Activated CD4-positive, alpha-beta T cell treated with anti-CD3 and anti-CD28 coated beads, Interleukin-2, amount 10 ng/mL, durations not matched to agents 24 days and 14 days (primary cell): ENCODE measurements at regions of chr9 and their contacts with region 1.

Region 1: GRCh38 chr9:131277910-131278701 is 1.8 kb upstream of the FAM78A start:
- DNase-seq: peak; percentile 90
- H3K4me3 Mint-ChIP-seq: peak overlapping the region; percentile 91
- H3K27ac Mint-ChIP-seq: peak overlapping the region; percentile 95
- H3K4me1 Mint-ChIP-seq: peaks cover 25% of the 10 kb centered on the region
- H3K27me3 Mint-ChIP-seq: peaks cover 14% of the 10 kb centered on the region

Region 2: DNA sequence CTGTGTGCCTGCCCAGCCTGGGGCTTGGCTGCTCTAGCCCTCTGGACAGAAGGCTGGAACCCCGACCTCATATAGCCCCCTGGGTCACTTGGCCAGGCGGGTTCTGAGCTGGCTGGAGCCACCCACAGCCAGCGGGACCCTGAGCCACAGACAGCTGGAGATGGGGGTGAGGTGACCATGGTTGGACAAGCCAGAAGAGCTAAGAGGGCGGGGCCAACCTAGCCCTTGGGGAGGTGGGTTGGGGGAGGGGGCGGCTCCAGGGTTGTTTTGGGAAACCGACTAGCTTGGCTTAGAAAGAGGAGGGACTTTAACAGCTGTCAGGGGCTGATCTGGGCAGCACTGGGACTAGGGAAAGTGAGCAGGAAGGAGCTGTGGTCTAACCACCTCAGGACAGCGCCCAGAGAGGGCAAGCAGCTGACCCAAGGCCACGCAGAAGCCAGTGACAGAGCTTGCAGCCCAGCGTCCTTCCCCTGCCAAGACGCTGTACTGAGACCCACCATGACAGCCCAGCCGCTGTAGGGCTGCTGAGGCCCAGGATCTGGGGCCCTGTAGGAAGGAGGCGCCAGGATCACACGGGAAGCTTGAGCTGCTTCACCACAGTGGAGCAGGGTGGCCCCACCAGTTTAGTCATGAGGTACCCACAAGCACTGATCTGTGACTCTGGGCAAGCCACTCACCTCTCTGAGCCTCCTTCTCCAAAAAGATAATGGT is 179.6 kb before region 1 on chr9:
- intact Hi-C with region 1: no loop called
- DNase-seq: no peak
- H3K4me3 Mint-ChIP-seq: no peak overlapping the region
- H3K27ac Mint-ChIP-seq: no peak overlapping the region
- H3K4me1 Mint-ChIP-seq: peaks cover 3% of the 10 kb centered on the region
- H3K27me3 Mint-ChIP-seq: peaks cover 35% of the 10 kb centered on the region

Region 3: GRCh38 chr9:131125128-131126058 is 152.7 kb before region 1 on chr9 and contains the start of gene NUP214:
- intact Hi-C with region 1: loop called (anchors 2 kb)
- DNase-seq: peak; percentile 100
- H3K4me3 Mint-ChIP-seq: peak within 1 kb of the TSS; percentile 99
- H3K27ac Mint-ChIP-seq: peak within 1 kb of the TSS; percentile 99
- H3K4me1 Mint-ChIP-seq: peaks cover 26% of the 10 kb centered on the region
- H3K27me3 Mint-ChIP-seq: peaks cover 2% of the 10 kb centered on the region
- total RNA-seq, gene NUP214: 77.7 and 79.2 TPM in 2 replicates

Region 4: GRCh38 chr9:131253891-131254491 is 24.1 kb before region 1 on chr9:
- intact Hi-C with region 1: loop called (anchors 2 kb)
- DNase-seq: peak; percentile 61
- H3K4me3 Mint-ChIP-seq: peak overlapping the region; percentile 28
- H3K27ac Mint-ChIP-seq: peak overlapping the region; percentile 93
- H3K4me1 Mint-ChIP-seq: peaks cover 41% of the 10 kb centered on the region
- H3K27me3 Mint-ChIP-seq: no peaks in the 10 kb centered on the region

Region 5: GRCh38 chr9:131668439-131669268 is 390.5 kb after region 1 on chr9:
- intact Hi-C with region 1: loop called (anchors 10 kb)
- DNase-seq: peak; percentile 90
- H3K4me3 Mint-ChIP-seq: peak overlapping the region; percentile 78
- H3K27ac Mint-ChIP-seq: peak overlapping the region; percentile 100
- H3K4me1 Mint-ChIP-seq: peaks cover 79% of the 10 kb centered on the region
- H3K27me3 Mint-ChIP-seq: no peaks in the 10 kb centered on the region

Region 6: GRCh38 chr9:132354637-132355355 is 1076.7 kb after region 1 on chr9 and contains the start of gene SETX:
- intact Hi-C with region 1: loop called (anchors 5 kb)
- DNase-seq: peak; percentile 97
- H3K4me3 Mint-ChIP-seq: peak within 1 kb of the TSS; percentile 74
- H3K27ac Mint-ChIP-seq: peak within 1 kb of the TSS; percentile 98
- H3K4me1 Mint-ChIP-seq: peaks cover 36% of the 10 kb centered on the region
- H3K27me3 Mint-ChIP-seq: peaks cover 2% of the 10 kb centered on the region
- total RNA-seq, gene SETX: 45.8 and 46.0 TPM in 2 replicates